ENCODE measurements at regions of chr21 and their contacts with region 1.

Region 1: GRCh38 chr21:42107881-42108553 is 36.9 kb downstream of the UMODL1 start:
- DNase-seq: peak; percentile 70
- ATAC-seq: peak; percentile 98
- H3K4me3 Mint-ChIP-seq: no peak overlapping the region
- H3K27ac Mint-ChIP-seq: no peak overlapping the region
- H3K4me1 Mint-ChIP-seq: peaks cover 4% of the 10 kb centered on the region
- H3K27me3 Mint-ChIP-seq: peaks cover 9% of the 10 kb centered on the region

Region 2: DNA sequence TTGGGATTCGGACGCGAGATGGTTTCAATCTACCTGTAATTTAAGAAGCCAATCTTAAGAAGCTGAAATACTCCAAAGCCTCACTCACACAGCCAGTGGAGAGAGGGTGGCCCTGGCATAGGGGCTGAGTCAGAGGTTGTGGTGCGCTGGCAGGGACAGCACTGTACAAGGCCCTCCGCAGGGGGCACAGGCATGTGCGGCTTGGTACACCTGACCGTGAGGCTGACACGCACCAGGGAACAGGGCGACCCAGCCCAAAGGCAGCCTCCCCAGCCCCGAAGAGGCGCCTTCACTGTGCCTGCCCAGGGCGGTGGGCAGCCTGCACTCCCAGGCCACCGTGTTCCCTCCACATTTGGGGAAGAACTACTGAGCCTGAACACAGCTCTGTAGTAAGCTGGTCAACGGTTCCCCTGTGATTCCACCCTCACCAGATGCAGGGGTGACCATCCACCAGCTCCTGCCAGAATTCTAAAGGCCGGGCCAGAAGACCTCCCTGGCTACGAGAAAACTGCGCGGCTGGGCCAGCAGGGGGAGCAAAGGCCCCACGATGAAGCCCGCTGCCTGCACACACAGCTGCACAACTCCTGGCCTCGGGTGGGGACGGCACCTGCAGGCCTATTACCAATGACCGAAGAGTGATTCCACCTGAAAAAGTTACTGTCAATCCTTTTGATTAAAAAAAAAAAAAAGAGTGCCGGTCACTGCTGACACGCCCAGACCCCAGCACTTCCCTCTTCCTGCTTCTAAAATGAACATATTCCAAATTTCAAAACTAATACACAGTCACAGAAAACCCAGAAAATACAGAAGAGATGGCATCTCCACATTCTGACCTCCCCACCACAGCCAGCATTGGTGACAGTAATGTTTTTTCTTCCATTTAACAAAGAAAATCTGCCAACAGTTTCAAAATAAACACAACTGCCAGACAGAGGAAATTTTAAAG is 291.5 kb before region 1 on chr21:
- CTCF ChIA-PET with region 1: interaction called, 26 read pairs
- DNase-seq: peak; percentile 64
- ATAC-seq: peak; percentile 77
- H3K4me3 Mint-ChIP-seq: no peak overlapping the region
- H3K27ac Mint-ChIP-seq: no peak overlapping the region
- H3K4me1 Mint-ChIP-seq: peaks cover 1% of the 10 kb centered on the region
- H3K27me3 Mint-ChIP-seq: no peaks in the 10 kb centered on the region

Region 3: GRCh38 chr21:42062236-42063022 is 45.6 kb before region 1 on chr21:
- CTCF ChIA-PET with region 1: interaction called, 11 read pairs
- DNase-seq: peak; percentile 95
- ATAC-seq: peak; percentile 89
- H3K4me3 Mint-ChIP-seq: peak overlapping the region; percentile 61
- H3K27ac Mint-ChIP-seq: peak overlapping the region; percentile 81
- H3K4me1 Mint-ChIP-seq: peaks cover 40% of the 10 kb centered on the region
- H3K27me3 Mint-ChIP-seq: no peaks in the 10 kb centered on the region

Region 4: DNA sequence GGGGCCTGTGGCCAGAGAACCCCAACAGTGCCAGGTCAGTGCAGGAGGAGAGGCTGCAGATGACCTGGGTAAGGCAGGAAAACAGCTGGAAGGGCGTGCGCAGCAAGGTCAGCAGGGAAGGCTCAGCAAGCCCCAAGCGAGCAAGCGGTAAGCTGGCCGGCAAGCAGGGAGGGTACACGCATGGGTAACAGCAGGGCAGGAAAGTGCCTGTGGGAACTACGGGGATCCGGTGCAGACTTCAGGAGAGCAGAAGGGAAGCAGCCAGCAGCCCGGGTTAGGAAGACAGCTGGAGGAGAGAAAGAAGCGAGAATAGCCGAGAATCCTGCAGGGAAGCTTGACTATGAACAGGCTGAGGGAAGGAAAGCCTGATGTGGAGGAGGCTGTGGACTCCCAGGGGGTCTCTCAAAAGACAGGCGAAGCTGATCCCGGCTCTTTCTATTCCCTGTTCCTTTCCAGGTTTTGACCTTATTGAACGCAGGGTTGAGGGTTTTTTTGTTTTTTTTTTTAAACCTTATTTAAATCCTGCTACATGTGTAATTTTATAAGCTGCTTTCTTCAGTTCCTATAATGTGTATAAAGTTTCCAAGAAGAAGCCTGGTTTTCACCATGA is 16.0 kb before region 1 on chr21:
- CTCF ChIA-PET with region 1: interaction called, 11 read pairs
- DNase-seq: no peak
- ATAC-seq: no peak
- H3K4me3 Mint-ChIP-seq: no peak overlapping the region
- H3K27ac Mint-ChIP-seq: no peak overlapping the region
- H3K4me1 Mint-ChIP-seq: peaks cover 6% of the 10 kb centered on the region
- H3K27me3 Mint-ChIP-seq: peaks cover 10% of the 10 kb centered on the region

Region 5: DNA sequence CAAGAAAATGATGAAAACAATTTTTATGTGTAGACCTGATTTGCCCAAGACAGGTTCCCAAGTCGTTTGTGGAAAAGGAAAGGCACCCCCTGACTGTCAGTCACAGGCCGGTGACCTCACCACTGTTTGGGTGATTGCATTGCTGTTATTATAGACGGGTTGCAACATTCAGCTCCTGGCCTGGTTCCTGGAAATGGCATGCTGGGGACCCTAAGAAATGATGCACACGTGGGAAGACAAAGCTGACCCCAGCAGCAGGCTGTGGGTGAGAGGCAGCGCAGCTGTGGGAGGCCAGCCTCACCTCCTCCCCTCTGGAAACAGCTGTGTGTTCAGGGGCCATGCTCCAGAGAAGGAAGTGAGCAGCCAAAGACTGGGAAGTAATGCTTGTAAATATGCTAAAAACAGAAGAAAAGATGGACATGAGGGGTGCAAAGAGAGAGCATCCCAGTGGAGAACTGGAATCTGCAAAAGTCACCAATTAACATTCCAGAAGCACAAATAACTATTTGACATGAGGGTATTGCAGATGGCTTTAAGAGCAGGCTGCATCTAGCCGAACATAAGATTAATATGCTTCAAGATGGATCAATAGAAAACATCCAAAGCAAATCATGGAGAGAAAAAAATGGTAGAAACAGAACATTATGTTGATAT is 87.5 kb after region 1 on chr21:
- CTCF ChIA-PET with region 1: no interaction called
- DNase-seq: no peak
- ATAC-seq: no peak
- H3K4me3 Mint-ChIP-seq: no peak overlapping the region
- H3K27ac Mint-ChIP-seq: no peak overlapping the region
- H3K4me1 Mint-ChIP-seq: peaks cover 65% of the 10 kb centered on the region
- H3K27me3 Mint-ChIP-seq: peaks cover 21% of the 10 kb centered on the region